ENCODE measurements at regions of chr20 and their contacts with region 1.

Region 1: DNA sequence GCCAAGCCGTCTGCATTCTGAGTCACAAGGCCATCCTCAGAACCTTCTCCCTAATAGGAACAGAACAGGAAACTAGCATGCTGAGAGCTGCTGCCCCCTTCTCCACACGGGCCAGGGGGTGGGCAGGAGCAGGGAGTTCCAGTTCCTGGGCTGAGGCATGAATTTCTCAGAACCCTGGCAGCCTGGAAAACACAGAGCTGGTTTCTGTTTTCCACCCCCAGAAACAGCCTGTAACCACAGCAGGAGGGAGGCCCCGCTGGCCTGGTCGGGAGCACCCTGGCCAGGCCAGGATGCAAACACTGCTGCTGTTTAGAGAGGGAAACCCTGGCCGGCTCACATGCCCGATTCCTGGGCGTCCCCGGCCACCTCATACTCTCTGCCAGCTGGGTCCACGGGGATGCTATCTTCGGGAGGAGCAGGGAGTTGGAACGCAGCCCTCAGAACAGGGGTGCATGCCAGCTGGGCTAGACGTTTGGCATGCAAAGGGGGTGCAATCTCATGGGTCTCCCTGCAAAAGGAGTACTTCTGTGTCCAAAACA is 130.1 kb downstream of the NFATC2 start:
- DNase-seq: no peak
- H3K4me3 ChIP-seq: no peak overlapping the region
- H3K4me3 Mint-ChIP-seq: peak overlapping the region in 5 of 8 donors; percentile 10 to 64 (median 31)
- H3K27ac ChIP-seq: peak overlapping the region; percentile 32
- H3K27ac Mint-ChIP-seq: peak overlapping the region; percentile 48 to 87 (median 73)
- H3K4me1 ChIP-seq: peaks cover 94% of the 10 kb centered on the region
- H3K4me1 Mint-ChIP-seq: peaks cover 52 to 90% (median 69%) of the 10 kb centered on the region in 4 donors
- H3K27me3 ChIP-seq: no peaks in the 10 kb centered on the region
- H3K27me3 Mint-ChIP-seq: no peaks in the 10 kb centered on the region

Region 2: GRCh38 chr20:51423290-51423667 is 10.9 kb after region 1 on chr20:
- CTCF ChIA-PET with region 1: interaction called, 7 read pairs
- POLR2A ChIA-PET with region 1: interaction called, 21 read pairs
- intact Hi-C with region 1: no loop called
- DNase-seq: peak in 1 of 5 donors; percentile 30
- H3K4me3 ChIP-seq: no peak overlapping the region
- H3K4me3 Mint-ChIP-seq: peak overlapping the region in 7 of 8 donors; percentile 12 to 84 (median 79)
- H3K27ac ChIP-seq: peak overlapping the region; percentile 71
- H3K27ac Mint-ChIP-seq: peak overlapping the region; percentile 87 to 95 (median 94)
- H3K4me1 ChIP-seq: peaks cover 87% of the 10 kb centered on the region
- H3K4me1 Mint-ChIP-seq: peaks cover 60 to 95% (median 71%) of the 10 kb centered on the region in 4 donors
- H3K27me3 ChIP-seq: no peaks in the 10 kb centered on the region
- H3K27me3 Mint-ChIP-seq: no peaks in the 10 kb centered on the region